Right ventricle myocardium superior (tissue), 1 donor: ENCODE measurements at regions of chr11 and their contacts with region 1.

Region 1: DNA sequence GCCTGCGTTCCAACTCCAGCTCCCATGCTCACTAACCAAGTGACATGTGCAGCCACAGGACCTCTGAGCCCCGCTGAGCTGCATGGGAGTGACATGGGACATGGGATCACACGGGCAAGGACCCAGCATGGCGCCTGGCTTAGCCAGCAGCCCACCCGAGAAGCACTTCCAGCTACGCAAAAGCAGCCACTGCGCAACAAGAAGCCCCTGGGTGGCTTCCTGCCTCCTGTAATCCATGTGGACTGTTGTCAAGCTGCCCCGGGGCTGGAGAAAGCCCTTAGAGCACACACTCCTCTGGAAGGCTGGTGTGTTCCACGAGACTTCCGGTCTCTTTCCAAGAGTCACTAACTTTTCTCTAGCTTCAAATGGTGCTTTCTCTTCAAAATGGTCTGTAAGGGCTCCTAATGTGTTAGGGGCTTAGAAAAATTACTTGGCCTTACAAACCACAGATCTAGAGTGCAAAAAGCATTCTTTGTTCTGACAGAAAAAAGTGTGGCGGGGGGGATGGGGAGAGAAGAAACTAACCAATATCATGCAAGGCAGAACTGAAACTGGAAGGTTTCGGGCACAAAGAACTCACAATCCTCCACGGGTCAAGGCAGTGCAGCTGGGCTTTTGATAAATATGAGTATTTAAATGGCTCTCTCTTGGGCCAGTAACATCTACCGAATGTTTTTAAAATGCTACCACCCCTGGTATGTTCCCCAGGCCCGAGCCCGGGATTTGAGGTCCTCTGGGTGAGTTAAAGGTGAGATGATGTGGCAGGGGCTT is 5.5 kb downstream of the C11orf24 start:
- DNase-seq: no peak
- ATAC-seq: no peak

Region 2: DNA sequence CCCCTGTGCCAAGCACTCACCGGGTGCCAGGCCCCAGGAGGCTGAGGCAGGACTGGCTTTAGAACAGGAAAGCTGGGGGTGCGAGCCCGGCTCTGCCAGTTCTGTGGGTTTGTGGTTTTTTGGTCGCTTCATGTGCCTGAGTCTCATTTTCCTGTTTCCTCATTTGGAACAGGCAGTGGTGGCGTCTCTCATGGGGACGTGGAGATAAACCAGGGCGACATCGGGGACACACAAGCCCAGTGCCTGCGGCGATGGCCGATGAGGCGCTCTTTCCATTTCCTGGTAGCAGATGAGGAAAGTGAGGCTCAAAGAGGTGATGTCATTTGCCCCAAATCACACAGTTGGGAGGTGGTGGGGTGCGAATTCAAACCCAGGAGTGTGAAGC is 124.3 kb before region 1 on chr11:
- intact Hi-C with region 1: no loop called
- DNase-seq: no peak
- ATAC-seq: peak; percentile 11

Region 3: DNA sequence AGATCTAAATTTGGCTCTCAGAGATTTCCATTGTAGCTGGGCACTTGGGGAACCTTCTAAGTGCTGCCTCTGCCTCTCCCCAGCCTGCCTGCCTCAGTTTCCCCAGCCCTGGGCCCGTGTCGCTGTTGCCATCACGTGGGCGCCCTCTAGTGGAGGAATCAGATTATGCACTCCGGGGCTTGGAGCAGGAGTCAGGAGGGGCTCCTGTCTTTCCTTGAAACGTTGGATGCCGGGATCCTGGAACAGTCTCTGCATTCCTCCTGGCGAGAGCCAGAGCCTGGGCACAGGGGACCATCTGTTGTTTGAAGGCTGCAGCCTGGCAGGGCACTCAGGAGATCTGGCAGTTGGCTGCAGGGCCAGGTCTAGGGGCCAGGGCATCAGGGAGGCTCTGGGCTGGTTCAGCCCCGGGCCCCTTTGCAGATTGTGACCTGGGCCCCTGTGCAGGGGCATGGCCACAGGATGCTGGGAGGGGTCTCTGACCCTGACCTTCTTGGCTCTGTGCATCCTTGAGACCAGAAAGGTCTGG is 117.7 kb after region 1 on chr11:
- intact Hi-C with region 1: loop called (anchors 5 kb)
- DNase-seq: peak; percentile 82
- ATAC-seq: peak; percentile 33